ENCODE measurements at regions of chr12 and their contacts with region 1.

Region 1: DNA sequence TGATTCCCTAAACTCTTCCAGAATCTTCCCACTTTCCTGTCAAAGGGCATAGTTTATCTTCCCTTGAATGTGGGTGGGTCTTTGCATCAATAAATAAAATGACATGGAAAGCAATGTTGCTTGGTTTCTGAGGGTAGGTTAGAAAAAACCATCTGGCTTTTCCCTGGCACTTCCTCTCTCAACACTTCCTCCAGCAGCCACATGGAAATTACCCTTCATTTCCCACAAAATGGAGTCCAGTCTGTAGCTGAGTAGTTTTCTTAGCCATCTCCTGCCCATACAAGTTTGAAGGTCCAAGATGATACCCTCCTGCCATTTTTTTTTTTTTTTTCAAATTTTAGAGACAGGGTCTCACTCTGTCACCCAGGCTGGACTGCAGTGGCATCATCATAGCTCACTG is 11.1 kb upstream of the NDUFA12 start:
- DNase-seq: no peak
- ATAC-seq: no peak
- H3K4me3 ChIP-seq: no peak overlapping the region
- H3K27ac ChIP-seq: no peak overlapping the region
- H3K4me1 ChIP-seq: no peaks in the 10 kb centered on the region
- H3K27me3 ChIP-seq: no peaks in the 10 kb centered on the region
- CTCF ChIP-seq: no peak
- EP300 ChIP-seq: no peak
- POLR2A ChIP-seq: no peak
- RAD21 ChIP-seq: no peak

Region 2: GRCh38 chr12:95805864-95806671 is 791.5 kb after region 1 on chr12:
- CTCF ChIA-PET with region 1: no interaction called
- POLR2A ChIA-PET with region 1: no interaction called
- in situ Hi-C with region 1: no loop called
- intact Hi-C with region 1: no loop called
- DNase-seq: no peak
- ATAC-seq: no peak
- H3K4me3 ChIP-seq: no peak overlapping the region
- H3K27ac ChIP-seq: no peak overlapping the region
- H3K4me1 ChIP-seq: peaks cover 47% of the 10 kb centered on the region
- H3K27me3 ChIP-seq: no peaks in the 10 kb centered on the region
- CTCF ChIP-seq: no peak
- EP300 ChIP-seq: no peak
- POLR2A ChIP-seq: no peak
- RAD21 ChIP-seq: no peak

Region 3: GRCh38 chr12:96445691-96446583 is 1431.4 kb after region 1 on chr12:
- CTCF ChIA-PET with region 1: no interaction called
- POLR2A ChIA-PET with region 1: no interaction called
- in situ Hi-C with region 1: no loop called
- intact Hi-C with region 1: loop called (anchors 5 kb)
- DNase-seq: no peak
- ATAC-seq: no peak
- H3K4me3 ChIP-seq: no peak overlapping the region
- H3K27ac ChIP-seq: no peak overlapping the region
- H3K4me1 ChIP-seq: no peaks in the 10 kb centered on the region
- H3K27me3 ChIP-seq: no peaks in the 10 kb centered on the region; a peak in 1 of 5 replicates
- CTCF ChIP-seq: no peak
- EP300 ChIP-seq: no peak
- POLR2A ChIP-seq: no peak
- RAD21 ChIP-seq: no peak